CD8-positive, alpha-beta T cell (primary cell): ENCODE measurements at regions of chr9 and their contacts with region 1.

Region 1: DNA sequence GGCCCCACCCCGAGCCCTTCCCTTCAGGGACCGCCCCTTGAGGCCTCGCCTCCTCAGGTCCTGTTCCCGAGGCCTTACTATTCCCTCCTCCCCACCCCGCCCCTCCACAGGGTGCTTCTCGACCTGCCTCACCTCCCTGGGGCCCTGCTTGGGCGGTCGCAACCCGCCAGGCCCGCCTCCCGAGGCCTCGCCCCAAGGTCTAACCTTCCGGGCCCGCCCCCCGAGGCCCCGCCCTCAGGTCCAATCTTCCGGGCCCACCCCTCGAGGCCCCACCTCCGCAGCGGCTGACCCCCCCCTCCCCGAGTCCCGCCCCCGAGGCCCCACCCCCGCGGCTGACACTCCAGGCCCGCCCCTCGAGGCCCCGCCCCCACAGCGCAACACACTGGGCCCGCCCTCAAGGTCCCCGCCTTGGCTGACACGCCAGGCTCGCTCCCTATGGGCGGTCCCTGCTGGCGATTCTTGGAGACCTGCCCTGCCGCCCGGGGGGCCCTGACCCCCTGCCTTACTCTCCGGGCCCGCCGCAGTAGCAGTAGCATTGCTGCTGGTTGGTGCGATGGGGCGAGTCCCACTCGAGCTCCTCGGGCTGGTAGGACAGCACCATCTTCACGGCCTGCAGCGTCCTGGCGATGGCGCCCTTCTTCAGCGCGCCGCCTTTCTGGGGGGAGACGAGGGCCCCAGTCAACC is 8.2 kb downstream of the PHF19 start:
- DNase-seq: peak; percentile 95 to 98 (median 97)
- ATAC-seq: peak; percentile 84
- H3K4me3 ChIP-seq: peak overlapping the region; percentile 57 to 71
- H3K4me3 Mint-ChIP-seq: peak overlapping the region; percentile 91
- H3K27ac ChIP-seq: peak overlapping the region; percentile 62 to 82
- H3K27ac Mint-ChIP-seq: peak overlapping the region; percentile 98
- H3K4me1 ChIP-seq: peaks cover 22% of the 10 kb centered on the region
- H3K4me1 Mint-ChIP-seq: peaks cover 21% of the 10 kb centered on the region
- H3K27me3 ChIP-seq: no peaks in the 10 kb centered on the region
- H3K27me3 Mint-ChIP-seq: no peaks in the 10 kb centered on the region
- CTCF ChIP-seq: peak; percentile 65

Region 2: DNA sequence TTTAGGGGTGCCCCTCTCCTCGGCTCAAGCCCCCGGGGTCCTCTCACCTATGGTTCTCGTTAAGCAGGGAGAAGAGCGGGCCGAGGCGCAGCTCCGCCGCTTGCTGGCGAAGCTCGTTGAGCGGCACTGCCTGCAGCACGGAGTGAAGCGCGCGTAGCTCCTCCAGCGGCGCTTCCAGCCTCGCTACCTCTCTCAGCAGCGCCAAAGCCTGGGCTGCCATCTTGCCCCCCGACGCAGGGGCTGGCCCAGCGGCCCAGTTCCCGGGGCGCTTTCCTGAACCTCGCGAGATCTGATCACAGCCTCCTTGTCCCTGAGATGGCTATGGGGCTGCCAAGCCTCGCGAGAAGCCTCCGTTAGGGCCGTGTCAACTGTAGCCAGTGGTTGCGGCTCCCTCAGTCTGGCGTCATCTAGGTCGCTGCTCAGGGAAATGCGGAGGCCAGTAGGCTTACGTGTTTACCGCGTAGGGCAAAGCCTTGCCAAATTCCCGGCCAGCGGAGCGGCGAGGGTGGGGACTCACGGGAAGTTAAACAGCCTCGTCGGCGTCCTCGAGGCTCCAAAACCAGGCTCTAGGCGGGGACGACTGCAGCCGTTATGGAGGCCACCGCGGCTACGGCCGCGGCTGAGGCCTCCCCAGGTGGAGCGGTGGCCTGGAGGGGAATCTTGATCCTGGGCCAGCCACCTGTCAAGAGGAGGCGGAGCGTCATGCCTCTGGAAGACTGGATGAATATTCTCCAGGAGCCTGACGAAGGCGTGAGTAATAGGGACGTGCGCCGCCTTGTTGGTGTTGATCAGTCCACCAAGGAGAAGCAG is 25.9 kb before region 1 on chr9 and contains the start of gene PSMD5:
- CTCF ChIA-PET with region 1: interaction called, 3 read pairs
- POLR2A ChIA-PET with region 1: interaction called, 10 read pairs
- intact Hi-C with region 1: loop called (anchors 1 kb)
- DNase-seq: peak; percentile 88 to 99 (median 95)
- ATAC-seq: peak; percentile 88
- H3K4me3 ChIP-seq: peak within 1 kb of the TSS; percentile 92 to 97
- H3K4me3 Mint-ChIP-seq: peak within 1 kb of the TSS; percentile 94
- H3K27ac ChIP-seq: peak within 1 kb of the TSS; percentile 94 to 98
- H3K27ac Mint-ChIP-seq: peak within 1 kb of the TSS; percentile 98
- H3K4me1 ChIP-seq: peaks cover 65% of the 10 kb centered on the region
- H3K4me1 Mint-ChIP-seq: peaks cover 78% of the 10 kb centered on the region
- H3K27me3 ChIP-seq: no peaks in the 10 kb centered on the region
- H3K27me3 Mint-ChIP-seq: no peaks in the 10 kb centered on the region
- CTCF ChIP-seq: no peak
- total RNA-seq, gene PSMD5: 38.5 to 58.2 TPM

Region 3: GRCh38 chr9:120904061-120904977 is 35.5 kb after region 1 on chr9:
- CTCF ChIA-PET with region 1: interaction called, 15 read pairs
- POLR2A ChIA-PET with region 1: interaction called, 4 read pairs
- intact Hi-C with region 1: no loop called
- DNase-seq: peak in 8 of 9 experiments; percentile 48 to 91 (median 75)
- ATAC-seq: peak; percentile 83
- H3K4me3 ChIP-seq: no peak overlapping the region
- H3K4me3 Mint-ChIP-seq: peak overlapping the region; percentile 44
- H3K27ac ChIP-seq: peak overlapping the region; percentile 68 to 85
- H3K27ac Mint-ChIP-seq: peak overlapping the region; percentile 93
- H3K4me1 ChIP-seq: peaks cover 77% of the 10 kb centered on the region
- H3K4me1 Mint-ChIP-seq: peaks cover 84% of the 10 kb centered on the region
- H3K27me3 ChIP-seq: no peaks in the 10 kb centered on the region
- H3K27me3 Mint-ChIP-seq: no peaks in the 10 kb centered on the region
- CTCF ChIP-seq: no peak

Region 4: GRCh38 chr9:120928483-120929228 is 59.8 kb after region 1 on chr9:
- CTCF ChIA-PET with region 1: interaction called, 351 read pairs
- POLR2A ChIA-PET with region 1: interaction called, 54 read pairs
- intact Hi-C with region 1: loop called in 1 of 2 experiments (anchors 1 kb)
- DNase-seq: peak; percentile 42 to 89 (median 74)
- ATAC-seq: peak; percentile 22
- H3K4me3 ChIP-seq: peak overlapping the region; percentile 70 to 74
- H3K4me3 Mint-ChIP-seq: peak overlapping the region; percentile 91
- H3K27ac ChIP-seq: peak overlapping the region; percentile 83 to 95
- H3K27ac Mint-ChIP-seq: peak overlapping the region; percentile 98
- H3K4me1 ChIP-seq: peaks cover 86% of the 10 kb centered on the region
- H3K4me1 Mint-ChIP-seq: peaks cover 87% of the 10 kb centered on the region
- H3K27me3 ChIP-seq: no peaks in the 10 kb centered on the region
- H3K27me3 Mint-ChIP-seq: no peaks in the 10 kb centered on the region
- CTCF ChIP-seq: no peak

Region 5: GRCh38 chr9:121074635-121075385 is 206.0 kb after region 1 on chr9 and contains the start of gene CNTRL:
- CTCF ChIA-PET with region 1: interaction called, 3 read pairs
- POLR2A ChIA-PET with region 1: no interaction called
- intact Hi-C with region 1: loop called (anchors 1 to 2 kb)
- DNase-seq: peak; percentile 62 to 91 (median 85)
- ATAC-seq: peak; percentile 83
- H3K4me3 ChIP-seq: peak within 1 kb of the TSS; percentile 78 to 80
- H3K4me3 Mint-ChIP-seq: peak within 1 kb of the TSS; percentile 98
- H3K27ac ChIP-seq: peak within 1 kb of the TSS; percentile 77 to 80
- H3K27ac Mint-ChIP-seq: peak within 1 kb of the TSS; percentile 95
- H3K4me1 ChIP-seq: peaks cover 19% of the 10 kb centered on the region
- H3K4me1 Mint-ChIP-seq: peaks cover 43% of the 10 kb centered on the region
- H3K27me3 ChIP-seq: no peaks in the 10 kb centered on the region
- H3K27me3 Mint-ChIP-seq: no peaks in the 10 kb centered on the region
- CTCF ChIP-seq: no peak
- total RNA-seq, gene CNTRL: 29.8 to 30.8 TPM